HEK293 (cell line): ENCODE measurements at regions of chr11 and their contacts with region 1.

Region 1: DNA sequence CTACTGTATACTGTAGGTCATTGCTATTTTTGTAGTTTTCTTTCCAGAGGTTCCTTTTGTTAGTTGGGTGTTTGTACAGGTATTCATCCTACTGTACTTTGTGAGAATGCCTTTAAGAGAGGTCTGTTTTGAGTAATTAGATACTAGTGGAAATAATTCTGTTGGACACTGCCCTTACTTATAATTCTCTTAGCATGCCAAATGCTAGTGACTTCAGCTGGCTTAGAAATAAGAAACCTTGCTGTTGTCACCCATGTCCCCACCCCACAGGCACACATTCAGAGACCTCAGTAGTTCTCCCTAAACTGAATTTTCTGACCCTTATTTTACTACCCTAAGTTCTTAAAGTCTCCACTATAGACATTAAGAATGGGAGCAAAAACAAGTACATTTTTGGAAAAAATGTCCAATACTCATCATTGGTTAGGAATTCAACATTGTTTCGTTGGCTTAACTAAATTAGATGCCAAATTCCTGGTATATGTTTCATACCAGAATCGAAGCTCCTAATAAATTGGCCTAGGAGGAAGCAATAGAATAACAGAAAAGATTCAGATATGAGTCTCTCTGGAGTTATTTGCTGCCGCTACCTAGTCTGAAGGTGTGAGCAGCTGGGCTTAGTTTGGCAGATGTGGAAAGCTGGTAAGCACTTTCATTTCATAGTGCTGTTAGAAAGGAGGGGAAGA is 28.4 kb downstream of the ZNF143 start:
- H3K4me3 ChIP-seq: no peak overlapping the region
- H3K27ac ChIP-seq: no peak overlapping the region
- H3K4me1 ChIP-seq: no peaks in the 10 kb centered on the region
- CTCF ChIP-seq: no peak

Region 2: GRCh38 chr11:9428706-9429105 is 60.5 kb before region 1 on chr11:
- CTCF ChIA-PET with region 1: no interaction called
- POLR2A ChIA-PET with region 1: no interaction called
- H3K4me3 ChIP-seq: no peak overlapping the region
- H3K27ac ChIP-seq: no peak overlapping the region
- H3K4me1 ChIP-seq: no peaks in the 10 kb centered on the region
- CTCF ChIP-seq: no peak

Region 3: GRCh38 chr11:9506489-9507276 is 17.5 kb after region 1 on chr11:
- CTCF ChIA-PET with region 1: interaction called, 11 read pairs
- POLR2A ChIA-PET with region 1: no interaction called
- H3K4me3 ChIP-seq: no peak overlapping the region
- H3K27ac ChIP-seq: no peak overlapping the region
- H3K4me1 ChIP-seq: no peaks in the 10 kb centered on the region
- CTCF ChIP-seq: peak; percentile 48; the same call in 1 of the 2 replicates

Region 4: DNA sequence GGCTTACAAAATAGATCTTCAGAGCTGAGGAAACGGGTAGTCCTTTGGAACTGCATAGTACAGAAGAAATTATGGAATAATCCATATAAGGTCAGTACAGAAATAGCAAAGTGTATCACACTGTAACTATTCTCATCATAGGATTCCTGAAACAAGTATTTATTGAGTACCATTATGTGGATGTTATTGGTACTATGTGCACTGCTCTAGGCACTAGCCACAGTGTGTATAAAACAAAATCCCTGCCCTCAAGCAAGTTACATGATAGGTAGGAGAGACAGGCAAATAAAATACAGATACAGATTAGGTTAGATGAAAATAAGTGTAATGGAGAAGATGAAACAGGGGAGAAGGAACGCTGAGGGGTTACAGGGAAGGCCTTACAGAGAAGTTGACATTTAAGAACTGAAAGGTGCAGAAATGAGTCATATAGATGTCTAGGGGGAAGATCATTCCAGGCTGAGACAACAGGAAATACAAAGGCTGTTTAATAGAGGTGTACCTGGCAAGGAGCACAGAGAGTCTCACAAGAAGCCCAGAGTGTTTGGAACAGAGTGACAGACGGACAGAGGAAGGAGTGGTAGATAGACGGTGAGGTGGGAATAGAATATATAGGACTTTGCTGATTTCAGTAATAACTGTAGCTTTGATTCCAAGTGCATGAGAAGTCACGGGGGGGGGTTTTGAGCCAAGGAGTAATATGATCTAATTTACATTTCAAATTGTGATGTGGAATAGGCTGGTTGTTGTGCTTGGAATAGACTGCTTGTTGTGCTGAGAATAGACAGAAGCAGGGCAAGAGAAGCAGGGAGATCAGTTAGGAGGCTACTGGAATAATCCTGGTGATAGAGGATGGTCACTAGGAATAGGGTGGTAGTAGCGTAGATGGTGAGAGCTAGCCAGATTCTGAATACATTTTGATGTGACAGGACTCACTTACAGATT is 1038.0 kb after region 1 on chr11:
- CTCF ChIA-PET with region 1: no interaction called
- POLR2A ChIA-PET with region 1: no interaction called
- H3K4me3 ChIP-seq: no peak overlapping the region
- H3K27ac ChIP-seq: no peak overlapping the region
- H3K4me1 ChIP-seq: no peaks in the 10 kb centered on the region
- CTCF ChIP-seq: no peak